ENCODE measurements at regions of chr20 and their contacts with region 1.

Region 1: GRCh38 chr20:2742934-2743559 is 50.5 kb downstream of the EBF4 start:
- DNase-seq: peak; percentile 83
- ATAC-seq: peak; percentile 73
- H3K4me3 Mint-ChIP-seq: no peak overlapping the region
- H3K27ac Mint-ChIP-seq: peak overlapping the region; percentile 63
- H3K4me1 Mint-ChIP-seq: peaks cover 45% of the 10 kb centered on the region
- H3K27me3 Mint-ChIP-seq: no peaks in the 10 kb centered on the region

Region 2: GRCh38 chr20:2693286-2694000 is 49.6 kb before region 1 on chr20:
- CTCF ChIA-PET with region 1: interaction called, 71 read pairs
- POLR2A ChIA-PET with region 1: no interaction called
- intact Hi-C with region 1: loop called (anchors 1 kb)
- DNase-seq: peak; percentile 71
- ATAC-seq: peak; percentile 67
- H3K4me3 Mint-ChIP-seq: no peak overlapping the region
- H3K27ac Mint-ChIP-seq: no peak overlapping the region
- H3K4me1 Mint-ChIP-seq: peaks cover 11% of the 10 kb centered on the region
- H3K27me3 Mint-ChIP-seq: peaks cover 43% of the 10 kb centered on the region

Region 3: GRCh38 chr20:2713285-2713684 is 29.8 kb before region 1 on chr20:
- CTCF ChIA-PET with region 1: interaction called, 20 read pairs
- POLR2A ChIA-PET with region 1: no interaction called
- intact Hi-C with region 1: loop called (anchors 1 to 2 kb)
- DNase-seq: no peak
- ATAC-seq: peak; percentile 81
- H3K4me3 Mint-ChIP-seq: no peak overlapping the region
- H3K27ac Mint-ChIP-seq: no peak overlapping the region
- H3K4me1 Mint-ChIP-seq: no peaks in the 10 kb centered on the region
- H3K27me3 Mint-ChIP-seq: no peaks in the 10 kb centered on the region

Region 4: GRCh38 chr20:2729251-2729713 is 13.8 kb before region 1 on chr20:
- CTCF ChIA-PET with region 1: interaction called, 36 read pairs
- POLR2A ChIA-PET with region 1: interaction called, 5 read pairs
- intact Hi-C with region 1: no loop called
- DNase-seq: peak; percentile 36
- ATAC-seq: peak; percentile 90
- H3K4me3 Mint-ChIP-seq: peak overlapping the region; percentile 2
- H3K27ac Mint-ChIP-seq: peak overlapping the region; percentile 79
- H3K4me1 Mint-ChIP-seq: peaks cover 21% of the 10 kb centered on the region
- H3K27me3 Mint-ChIP-seq: no peaks in the 10 kb centered on the region

Region 5: GRCh38 chr20:3000852-3001523 is 257.9 kb after region 1 on chr20:
- CTCF ChIA-PET with region 1: interaction called, 16 read pairs
- POLR2A ChIA-PET with region 1: no interaction called
- intact Hi-C with region 1: no loop called
- DNase-seq: peak; percentile 23
- ATAC-seq: peak; percentile 98
- H3K4me3 Mint-ChIP-seq: no peak overlapping the region
- H3K27ac Mint-ChIP-seq: peak overlapping the region; percentile 59
- H3K4me1 Mint-ChIP-seq: peaks cover 11% of the 10 kb centered on the region
- H3K27me3 Mint-ChIP-seq: no peaks in the 10 kb centered on the region

Measured in activated CD4-positive, alpha-beta T cell treated with anti-CD3 and anti-CD28 coated beads for 36 hours (primary cell).